CD4-positive, alpha-beta memory T cell (primary cell): ENCODE measurements at regions of chr13 and their contacts with region 1.

Region 1: DNA sequence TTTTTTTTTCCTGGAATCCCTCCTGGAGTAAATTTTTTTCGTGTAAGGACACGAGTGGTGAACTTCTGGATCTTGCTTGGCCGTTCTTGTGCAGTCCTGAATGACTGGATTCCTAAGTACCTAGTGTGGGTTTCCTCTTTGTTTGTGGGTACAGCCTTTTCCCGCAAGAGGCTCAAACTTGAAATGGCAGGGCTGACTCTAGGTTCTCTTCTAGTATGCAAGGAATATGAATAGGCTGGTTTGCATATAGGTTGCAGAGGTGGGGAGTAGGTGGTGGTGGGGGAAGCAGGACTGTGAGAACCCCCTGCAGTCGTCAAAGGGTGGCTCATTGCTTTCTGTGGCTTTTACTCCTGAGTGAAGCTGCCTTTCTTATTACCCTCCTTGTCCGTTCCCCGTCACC is 13.6 kb downstream of the UBAC2 start:
- DNase-seq: peak in 1 of 5 donors; percentile 61
- H3K4me3 ChIP-seq: peak overlapping the region in 1 of 2 donors; percentile 62
- H3K4me3 Mint-ChIP-seq: peak overlapping the region; percentile 73 to 97 (median 94)
- H3K27ac ChIP-seq: peak overlapping the region; percentile 68
- H3K27ac Mint-ChIP-seq: peak overlapping the region; percentile 96 to 99 (median 99)
- H3K4me1 ChIP-seq: peaks cover 78% of the 10 kb centered on the region
- H3K4me1 Mint-ChIP-seq: peaks cover 55 to 92% (median 74%) of the 10 kb centered on the region in 4 donors
- H3K27me3 ChIP-seq: no peaks in the 10 kb centered on the region
- H3K27me3 Mint-ChIP-seq: no peaks in the 10 kb centered on the region

Region 2: DNA sequence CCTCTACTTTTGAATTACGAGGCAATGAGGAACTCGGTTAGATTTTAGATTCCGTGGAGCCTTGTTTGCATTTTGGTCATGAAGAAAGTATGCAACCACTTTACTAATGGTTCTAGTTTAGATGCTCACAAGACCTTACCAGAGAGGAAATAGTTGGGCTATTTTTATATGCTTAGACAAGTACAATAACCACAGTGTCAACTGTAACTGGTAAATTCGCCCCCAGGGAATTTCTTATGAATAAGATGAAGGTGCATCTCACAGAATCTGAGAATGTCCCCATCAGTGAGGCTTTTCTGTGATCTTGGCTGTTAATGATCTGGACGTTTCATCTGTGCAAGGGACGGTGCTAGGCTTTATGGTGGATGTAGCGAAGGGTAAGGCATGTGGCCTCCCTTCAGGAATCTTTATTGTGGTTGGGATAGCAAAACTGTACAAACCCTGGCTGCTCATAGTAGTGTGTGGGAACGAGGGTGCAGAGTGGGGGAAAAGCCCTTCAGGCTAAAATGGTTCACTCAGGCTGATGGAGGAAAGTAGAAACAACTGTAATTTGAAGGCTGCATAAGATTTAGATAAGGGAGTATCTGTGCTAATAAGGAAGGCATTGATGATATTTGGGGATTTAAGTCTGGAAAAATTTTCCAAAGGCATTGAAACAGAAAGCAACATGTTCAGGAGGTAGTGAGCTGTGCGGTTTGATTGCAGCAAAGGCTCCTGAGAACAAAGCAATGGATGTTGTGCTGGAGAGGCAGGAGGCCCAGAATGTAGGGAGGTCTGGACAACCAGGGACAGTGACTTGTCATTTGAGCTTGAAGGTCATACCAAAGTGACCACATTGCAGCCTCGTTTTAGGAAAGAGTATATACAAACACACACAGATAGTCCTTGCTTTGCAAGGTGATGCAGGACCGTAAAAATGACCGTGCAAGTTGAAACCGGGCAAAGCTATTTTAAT is 14.8 kb after region 1 on chr13:
- CTCF ChIA-PET with region 1: interaction called, 12 read pairs
- POLR2A ChIA-PET with region 1: interaction called, 21 read pairs
- intact Hi-C with region 1: loop called (anchors 1 kb)
- DNase-seq: no peak
- H3K4me3 ChIP-seq: no peak overlapping the region
- H3K4me3 Mint-ChIP-seq: peak overlapping the region; percentile 33 to 91 (median 78)
- H3K27ac ChIP-seq: peak overlapping the region; percentile 52
- H3K27ac Mint-ChIP-seq: peak overlapping the region; percentile 63 to 92 (median 88)
- H3K4me1 ChIP-seq: peaks cover 86% of the 10 kb centered on the region
- H3K4me1 Mint-ChIP-seq: peaks cover 56 to 75% (median 65%) of the 10 kb centered on the region in 4 donors
- H3K27me3 ChIP-seq: no peaks in the 10 kb centered on the region
- H3K27me3 Mint-ChIP-seq: no peaks in the 10 kb centered on the region

Region 3: DNA sequence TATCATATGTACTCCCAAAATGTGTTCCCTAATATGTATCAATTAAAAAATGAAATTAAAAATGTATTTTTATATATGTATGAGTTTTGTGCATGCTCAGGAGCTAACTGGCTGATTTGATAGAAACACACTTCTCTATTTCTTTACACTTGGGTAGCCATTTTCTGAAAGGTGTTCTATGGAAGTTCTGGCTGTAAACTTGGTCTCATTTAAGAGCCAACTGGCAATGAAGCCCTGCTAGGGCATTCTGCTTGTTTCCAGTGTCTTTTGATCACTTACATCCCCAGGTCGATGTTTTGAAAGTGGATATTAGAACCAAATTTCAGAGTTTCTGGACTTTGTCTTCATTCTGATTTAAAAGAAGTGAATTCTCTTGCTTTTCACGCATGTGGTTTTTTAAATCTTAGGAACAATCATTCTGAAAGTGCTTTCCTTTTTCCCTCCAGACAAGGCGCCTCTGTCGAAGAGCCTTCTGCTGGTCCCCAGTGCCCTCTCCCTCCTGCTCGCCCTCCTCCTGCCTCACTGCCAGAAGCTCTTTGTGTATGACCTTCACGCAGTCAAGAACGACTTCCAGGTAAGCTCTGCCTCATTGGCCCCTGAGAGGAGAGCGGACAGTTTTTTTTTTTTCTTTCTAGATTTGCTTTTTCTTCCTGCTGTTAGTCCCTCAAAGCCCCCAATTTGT is 23.9 kb after region 1 on chr13:
- CTCF ChIA-PET with region 1: interaction called, 12 read pairs
- POLR2A ChIA-PET with region 1: interaction called, 21 read pairs
- intact Hi-C with region 1: loop called (anchors 1 kb)
- DNase-seq: peak in 3 of 5 donors; percentile 38 to 59 (median 42)
- H3K4me3 ChIP-seq: peak overlapping the region in 1 of 2 donors; percentile 55
- H3K4me3 Mint-ChIP-seq: peak overlapping the region; percentile 86 to 92 (median 88)
- H3K27ac ChIP-seq: peak overlapping the region; percentile 63
- H3K27ac Mint-ChIP-seq: peak overlapping the region; percentile 84 to 99 (median 97)
- H3K4me1 ChIP-seq: peaks cover 62% of the 10 kb centered on the region
- H3K4me1 Mint-ChIP-seq: peaks cover 39 to 71% (median 56%) of the 10 kb centered on the region in 4 donors
- H3K27me3 ChIP-seq: no peaks in the 10 kb centered on the region
- H3K27me3 Mint-ChIP-seq: no peaks in the 10 kb centered on the region

Region 4: GRCh38 chr13:99258210-99258860 is 44.1 kb after region 1 on chr13 and contains the start of gene GPR18:
- CTCF ChIA-PET with region 1: interaction called, 325 read pairs
- POLR2A ChIA-PET with region 1: interaction called, 36 read pairs
- intact Hi-C with region 1: loop called (anchors 1 kb)
- DNase-seq: peak; percentile 50 to 69 (median 62)
- H3K4me3 ChIP-seq: peak within 1 kb of the TSS; percentile 52 to 67
- H3K4me3 Mint-ChIP-seq: peak within 1 kb of the TSS; percentile 89 to 98 (median 94)
- H3K27ac ChIP-seq: peak within 1 kb of the TSS; percentile 60
- H3K27ac Mint-ChIP-seq: peak within 1 kb of the TSS; percentile 84 to 96 (median 94)
- H3K4me1 ChIP-seq: peaks cover 55% of the 10 kb centered on the region
- H3K4me1 Mint-ChIP-seq: peaks cover 47 to 85% (median 59%) of the 10 kb centered on the region in 4 donors
- H3K27me3 ChIP-seq: no peaks in the 10 kb centered on the region
- H3K27me3 Mint-ChIP-seq: no peaks in the 10 kb centered on the region
- total RNA-seq, gene GPR18: 21.5 to 22.8 TPM

Region 5: DNA sequence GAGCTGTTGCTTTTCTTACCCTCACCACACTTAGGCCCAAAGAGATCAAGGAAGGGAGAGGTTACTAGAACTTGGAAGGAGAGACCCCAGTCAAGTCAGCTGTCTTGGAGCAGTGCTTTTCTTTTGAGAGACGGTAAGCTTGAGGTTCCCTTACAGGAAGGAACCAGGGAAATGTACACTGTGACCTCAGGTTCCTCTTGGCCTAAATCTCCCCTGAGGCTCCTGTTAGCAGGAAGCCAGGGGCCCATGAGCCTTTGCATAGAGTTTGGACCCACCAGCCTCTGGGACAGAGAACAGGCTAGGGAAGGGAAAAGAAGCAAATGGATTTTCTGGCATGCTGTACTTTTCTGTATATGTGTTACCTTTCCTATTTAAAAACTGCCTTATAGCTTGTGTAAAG is 49.8 kb after region 1 on chr13:
- CTCF ChIA-PET with region 1: interaction called, 325 read pairs
- POLR2A ChIA-PET with region 1: interaction called, 13 read pairs
- intact Hi-C with region 1: no loop called
- DNase-seq: no peak
- H3K4me3 ChIP-seq: no peak overlapping the region
- H3K4me3 Mint-ChIP-seq: peak overlapping the region in 7 of 8 donors; percentile 17 to 74 (median 47)
- H3K27ac ChIP-seq: peak overlapping the region; percentile 39
- H3K27ac Mint-ChIP-seq: peak overlapping the region; percentile 59 to 92 (median 88)
- H3K4me1 ChIP-seq: peaks cover 50% of the 10 kb centered on the region
- H3K4me1 Mint-ChIP-seq: peaks cover 43 to 70% (median 55%) of the 10 kb centered on the region in 4 donors
- H3K27me3 ChIP-seq: no peaks in the 10 kb centered on the region
- H3K27me3 Mint-ChIP-seq: no peaks in the 10 kb centered on the region

Region 6: DNA sequence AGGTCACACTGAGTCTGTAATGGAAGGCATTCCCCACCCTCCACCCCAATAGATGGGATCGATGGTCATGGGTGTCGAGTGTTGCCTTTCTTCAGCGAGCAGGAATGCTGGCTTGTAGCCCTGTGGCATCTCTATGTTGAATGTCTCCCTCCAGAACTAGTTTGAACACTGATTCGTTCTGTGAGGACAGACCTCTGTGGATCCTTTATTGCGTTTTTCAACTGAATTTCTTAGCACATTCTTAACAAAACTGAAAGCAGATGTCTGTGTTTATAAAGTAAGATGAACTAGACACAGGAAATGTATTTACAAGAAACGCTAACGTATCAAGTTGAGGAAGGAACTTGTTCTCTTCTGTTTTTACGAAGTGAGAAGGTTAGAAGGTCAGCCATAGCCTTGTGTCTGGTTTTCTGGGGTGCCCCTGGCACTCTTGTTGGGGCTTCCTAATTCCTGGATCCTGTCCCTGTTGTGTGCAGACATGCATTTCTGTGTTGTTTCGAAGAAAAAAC is 250.3 kb after region 1 on chr13:
- CTCF ChIA-PET with region 1: no interaction called
- POLR2A ChIA-PET with region 1: no interaction called
- intact Hi-C with region 1: no loop called
- DNase-seq: peak in 2 of 5 donors; percentile 9 to 27
- H3K4me3 ChIP-seq: peak overlapping the region in 1 of 2 donors; percentile 17
- H3K4me3 Mint-ChIP-seq: peak overlapping the region; percentile 12 to 75 (median 66)
- H3K27ac ChIP-seq: peak overlapping the region; percentile 11
- H3K27ac Mint-ChIP-seq: peak overlapping the region; percentile 82 to 95 (median 90)
- H3K4me1 ChIP-seq: peaks cover 22% of the 10 kb centered on the region
- H3K4me1 Mint-ChIP-seq: peaks cover 12 to 24% (median 18%) of the 10 kb centered on the region in 4 donors
- H3K27me3 ChIP-seq: no peaks in the 10 kb centered on the region
- H3K27me3 Mint-ChIP-seq: no peaks in the 10 kb centered on the region